K562 (cell line): ENCODE measurements at regions of chr1 and their contacts with region 1.

Region 1: DNA sequence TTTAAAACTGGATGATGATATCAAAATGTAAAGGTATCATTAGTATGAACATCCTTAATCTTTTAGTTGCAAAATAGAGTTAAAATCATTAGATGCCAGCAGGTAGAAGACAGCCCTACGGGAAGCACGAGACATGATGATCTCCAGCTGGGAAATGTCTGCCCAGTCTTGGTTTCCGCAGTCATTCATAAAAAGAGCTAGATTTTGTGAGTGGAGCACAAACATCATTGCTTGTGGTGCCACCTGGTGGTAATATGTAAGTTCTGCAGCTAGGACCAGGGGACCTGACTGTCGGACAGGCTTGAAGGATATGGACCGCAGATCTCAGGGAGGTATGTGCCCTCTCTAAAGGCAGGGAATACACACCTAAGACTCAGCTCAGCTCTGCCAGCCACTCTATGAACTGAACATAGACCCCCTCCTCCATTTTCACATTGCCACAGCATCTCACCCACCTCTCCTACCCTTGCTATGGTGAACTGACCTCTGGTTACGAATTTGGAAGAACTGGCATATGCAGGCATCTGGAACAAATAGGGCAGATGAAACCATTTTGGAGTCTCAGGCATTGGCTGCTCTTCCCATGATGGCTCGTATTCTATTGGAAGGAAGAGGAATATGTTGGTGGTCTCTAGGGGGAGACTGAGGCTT is 9.2 kb downstream of the FCMR start:
- DNase-seq: peak; percentile 81 to 89 (median 84)
- ATAC-seq: peak; percentile 81
- H3K4me3 ChIP-seq: no peak overlapping the region
- H3K27ac ChIP-seq: no peak overlapping the region
- H3K4me1 ChIP-seq: peaks cover 4 to 12% of the 10 kb centered on the region in 2 experiments; a peak in 3 of 5 replicates
- H3K27me3 ChIP-seq: peaks cover 45 to 63% of the 10 kb centered on the region in 2 experiments
- CTCF ChIP-seq: peak; percentile 90 to 92 (median 92)
- EP300 ChIP-seq: no peak
- POLR2A ChIP-seq: no peak
- RAD21 ChIP-seq: peak; percentile 87 to 94

Region 2: DNA sequence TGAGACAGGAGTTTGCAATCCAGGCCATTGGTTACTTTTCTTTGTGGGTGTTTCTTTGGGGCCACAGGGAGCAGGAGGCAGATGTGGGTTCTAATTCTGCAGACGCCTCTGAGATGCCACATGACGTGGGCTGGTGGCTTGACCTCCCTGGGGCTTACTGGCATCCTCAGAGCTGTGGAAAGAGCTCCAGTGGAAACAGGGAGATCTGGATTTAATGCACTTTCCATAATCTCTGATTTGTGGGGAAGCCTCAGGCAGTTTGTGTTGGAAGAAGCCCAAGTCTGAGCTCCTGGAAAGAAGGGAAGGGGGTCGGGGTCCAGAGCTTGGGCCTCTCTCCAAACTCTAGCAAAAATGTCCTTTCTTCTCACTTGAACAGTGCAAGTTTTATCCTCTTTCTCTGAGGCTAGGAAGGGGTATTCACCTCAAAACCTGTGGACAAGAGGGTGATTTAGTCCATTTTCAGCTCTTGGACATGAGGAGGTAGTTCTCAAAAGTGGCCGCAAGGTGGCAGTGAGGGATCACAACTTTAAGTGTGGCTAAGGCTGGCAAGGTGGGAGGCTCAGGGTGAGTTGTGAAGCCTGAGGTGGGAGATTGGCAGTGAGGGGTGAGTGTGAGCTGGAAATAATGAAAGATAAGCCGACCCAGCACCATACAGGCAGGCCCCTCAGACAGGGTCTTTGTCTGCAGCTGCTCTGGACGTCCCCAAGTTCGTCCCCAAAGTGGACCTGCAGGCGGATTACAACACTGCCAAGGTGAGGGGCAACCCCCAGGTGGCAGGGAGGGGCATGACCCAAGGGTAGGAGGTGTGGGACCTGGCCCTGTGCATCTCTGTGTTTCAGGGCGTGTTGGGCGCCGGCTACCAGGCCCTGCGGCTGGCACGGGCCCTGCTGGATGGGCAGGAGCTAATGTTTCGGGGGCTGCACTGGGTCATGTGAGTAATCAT is 433.1 kb before region 1 on chr1:
- CTCF ChIA-PET with region 1: interaction called, 6 read pairs
- POLR2A ChIA-PET with region 1: no interaction called
- in situ Hi-C with region 1: no loop called
- intact Hi-C with region 1: loop called (anchors 5 kb)
- DNase-seq: peak; percentile 85 to 88 (median 86)
- ATAC-seq: peak; percentile 82
- H3K4me3 ChIP-seq: no peak overlapping the region
- H3K27ac ChIP-seq: no peak overlapping the region
- H3K4me1 ChIP-seq: peaks cover 0 to 4% of the 10 kb centered on the region in 2 experiments; a peak in 3 of 5 replicates
- H3K27me3 ChIP-seq: peaks cover 18 to 32% of the 10 kb centered on the region in 2 experiments; a peak in 4 of 5 replicates
- CTCF ChIP-seq: peak; percentile 86 to 95 (median 91)
- EP300 ChIP-seq: no peak
- POLR2A ChIP-seq: no peak
- RAD21 ChIP-seq: peak; percentile 80 to 86

Region 3: DNA sequence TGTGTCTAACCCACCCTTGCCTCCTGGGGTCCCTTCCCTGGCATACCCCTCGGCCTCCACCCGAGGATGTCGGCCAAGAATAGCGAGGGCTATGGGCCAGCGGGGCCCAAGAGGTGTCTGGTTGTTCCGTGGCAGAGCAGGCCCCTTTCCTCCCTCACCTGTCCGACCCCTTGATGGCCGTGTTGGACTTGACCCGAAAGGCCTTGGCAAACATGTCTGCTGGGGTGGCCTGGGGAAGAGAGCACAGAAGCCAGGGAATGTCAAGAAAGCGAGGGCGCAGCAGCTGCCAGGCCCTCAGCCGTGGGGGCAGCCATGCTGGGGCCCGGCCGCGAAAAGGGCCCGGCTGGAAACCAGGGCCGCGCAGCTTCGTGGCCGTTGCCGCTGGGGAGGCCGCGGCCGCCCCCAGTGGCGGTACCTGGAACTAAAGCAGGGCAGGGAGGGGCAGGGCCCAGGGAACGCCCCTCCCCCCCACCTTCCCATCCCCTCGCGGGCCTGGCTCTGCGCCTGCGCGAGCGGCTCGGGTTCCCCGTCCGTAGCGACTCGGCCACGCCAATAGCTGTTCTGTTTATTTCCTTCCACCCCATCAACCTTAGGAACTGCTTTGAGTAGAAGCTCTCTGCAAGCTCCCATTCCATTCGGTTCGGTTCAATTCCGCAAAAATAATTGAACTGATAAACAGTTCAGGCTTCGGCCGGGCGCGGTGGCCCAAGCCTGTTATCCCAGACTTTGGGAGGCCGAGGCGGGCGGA is 300.3 kb before region 1 on chr1 and contains the start of gene EIF2D:
- CTCF ChIA-PET with region 1: interaction called, 43 read pairs
- POLR2A ChIA-PET with region 1: interaction called, 5 read pairs
- in situ Hi-C with region 1: loop called (anchors 25 kb)
- intact Hi-C with region 1: loop called (anchors 1 kb)
- DNase-seq: peak; percentile 98 to 100 (median 100)
- ATAC-seq: peak; percentile 98
- H3K4me3 ChIP-seq: peak within 1 kb of the TSS; percentile 97
- H3K27ac ChIP-seq: peak within 1 kb of the TSS; percentile 94
- H3K4me1 ChIP-seq: peaks cover 5 to 7% of the 10 kb centered on the region in 2 experiments; a peak in 4 of 5 replicates
- H3K27me3 ChIP-seq: no peaks in the 10 kb centered on the region
- CTCF ChIP-seq: peak; percentile 98 to 99 (median 98)
- EP300 ChIP-seq: no peak
- POLR2A ChIP-seq: peak; percentile 99
- RAD21 ChIP-seq: peak; percentile 73
- polyA plus RNA-seq, gene EIF2D: 86.9 to 130 TPM

Region 4: GRCh38 chr1:206725109-206725963 is 187.2 kb before region 1 on chr1:
- CTCF ChIA-PET with region 1: interaction called, 33 read pairs
- POLR2A ChIA-PET with region 1: interaction called, 4 read pairs
- in situ Hi-C with region 1: no loop called
- intact Hi-C with region 1: no loop called
- DNase-seq: peak; percentile 69 to 82 (median 72)
- ATAC-seq: peak; percentile 88
- H3K4me3 ChIP-seq: no peak overlapping the region
- H3K27ac ChIP-seq: no peak overlapping the region
- H3K4me1 ChIP-seq: peaks cover 19 to 27% of the 10 kb centered on the region in 2 experiments
- H3K27me3 ChIP-seq: no peaks in the 10 kb centered on the region
- CTCF ChIP-seq: peak; percentile 77 to 87 (median 82)
- EP300 ChIP-seq: no peak
- POLR2A ChIP-seq: no peak
- RAD21 ChIP-seq: peak; percentile 45 to 51

Region 5: GRCh38 chr1:206808615-206809014 is 104.0 kb before region 1 on chr1:
- CTCF ChIA-PET with region 1: interaction called, 7 read pairs
- POLR2A ChIA-PET with region 1: interaction called, 3 read pairs
- in situ Hi-C with region 1: no loop called
- intact Hi-C with region 1: loop called (anchors 1 kb)
- DNase-seq: peak; percentile 30 to 71 (median 48)
- ATAC-seq: peak; percentile 97
- H3K4me3 ChIP-seq: no peak overlapping the region
- H3K27ac ChIP-seq: no peak overlapping the region
- H3K4me1 ChIP-seq: no peaks in the 10 kb centered on the region
- H3K27me3 ChIP-seq: peaks cover 5 to 13% of the 10 kb centered on the region in 2 experiments; a peak in 3 of 5 replicates
- CTCF ChIP-seq: peak; percentile 75 to 81 (median 77)
- EP300 ChIP-seq: no peak
- POLR2A ChIP-seq: no peak
- RAD21 ChIP-seq: peak; percentile 92 to 95

Region 6: DNA sequence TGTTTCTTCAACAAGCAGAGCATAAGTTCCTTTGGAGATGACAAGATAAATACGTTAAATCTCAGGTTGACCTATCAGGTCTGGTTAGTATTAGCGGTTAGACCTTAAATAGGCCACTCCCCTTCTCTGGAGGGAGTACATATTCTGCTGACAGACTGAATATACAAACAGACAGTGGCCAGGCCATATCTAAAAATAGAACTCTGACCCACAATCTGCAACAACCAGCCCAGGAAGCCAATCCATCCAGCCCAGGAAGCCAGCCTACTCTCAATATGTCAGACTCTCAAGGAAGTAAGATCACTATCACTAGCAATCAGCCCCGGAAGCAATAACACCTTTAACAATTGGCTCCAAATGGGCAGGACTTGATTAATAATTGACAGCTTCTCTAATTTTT is 40.4 kb before region 1 on chr1:
- CTCF ChIA-PET with region 1: no interaction called
- POLR2A ChIA-PET with region 1: no interaction called
- in situ Hi-C with region 1: no loop called
- intact Hi-C with region 1: no loop called
- DNase-seq: no peak
- ATAC-seq: no peak
- H3K4me3 ChIP-seq: no peak overlapping the region
- H3K27ac ChIP-seq: no peak overlapping the region
- H3K4me1 ChIP-seq: no peaks in the 10 kb centered on the region
- H3K27me3 ChIP-seq: peaks cover 0 to 5% of the 10 kb centered on the region in 2 experiments; a peak in 2 of 5 replicates
- CTCF ChIP-seq: no peak
- EP300 ChIP-seq: no peak
- POLR2A ChIP-seq: no peak
- RAD21 ChIP-seq: no peak

Region 7: DNA sequence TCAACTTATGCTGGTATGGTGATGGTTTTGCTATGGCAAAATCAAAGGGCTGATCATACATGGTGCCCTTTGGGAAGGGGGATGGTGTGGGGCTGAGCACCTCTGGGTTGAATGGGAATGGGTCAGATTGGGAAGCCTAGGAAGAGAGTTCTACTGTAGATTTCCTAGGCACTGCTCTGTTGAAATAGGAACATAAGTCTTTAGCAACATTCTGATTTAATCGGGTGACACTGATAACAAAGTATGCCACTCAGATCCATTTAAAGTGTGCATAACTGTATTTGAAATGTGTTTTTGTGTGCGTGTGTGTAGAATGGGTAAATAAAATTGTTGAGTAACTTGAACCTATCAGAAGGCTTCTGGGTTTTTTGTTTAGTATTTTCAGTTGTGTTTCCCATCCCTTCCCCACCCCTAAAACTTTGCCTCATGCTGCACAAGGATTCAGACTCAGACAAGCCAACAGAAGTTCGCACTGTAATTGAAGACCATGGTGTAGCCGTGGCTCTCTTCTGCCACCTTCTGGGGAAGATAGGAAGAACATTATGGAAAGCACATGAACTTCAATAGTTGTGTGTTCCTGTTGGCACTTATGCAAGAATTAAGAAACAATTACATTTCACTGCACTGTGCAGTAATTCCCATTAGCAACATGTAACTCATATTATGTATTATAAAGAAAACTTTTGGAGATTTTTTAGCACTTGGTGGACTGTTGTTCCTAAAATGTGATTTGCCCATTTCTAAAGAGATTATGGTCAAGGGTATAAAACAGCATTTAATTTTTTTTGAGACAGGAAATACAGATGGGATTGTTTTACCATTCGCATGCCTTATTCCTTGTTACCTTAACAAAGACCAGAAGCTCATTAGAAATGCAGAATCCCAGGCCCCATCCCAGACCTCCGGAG is 165.2 kb after region 1 on chr1:
- CTCF ChIA-PET with region 1: interaction called, 5 read pairs
- POLR2A ChIA-PET with region 1: interaction called, 3 read pairs
- in situ Hi-C with region 1: no loop called
- intact Hi-C with region 1: loop called (anchors 1 kb)
- DNase-seq: peak; percentile 79 to 91 (median 82)
- ATAC-seq: peak; percentile 96
- H3K4me3 ChIP-seq: no peak overlapping the region
- H3K27ac ChIP-seq: no peak overlapping the region
- H3K4me1 ChIP-seq: peaks cover 0 to 10% of the 10 kb centered on the region in 2 experiments; a peak in 2 of 5 replicates
- H3K27me3 ChIP-seq: no peaks in the 10 kb centered on the region
- CTCF ChIP-seq: peak; percentile 92 to 98 (median 95)
- EP300 ChIP-seq: no peak
- POLR2A ChIP-seq: no peak
- RAD21 ChIP-seq: peak; percentile 97 to 98